ENCODE measurements at regions of chr5 and their contacts with region 1.

Region 1: GRCh38 chr5:170986598-170986997 is 124.8 kb downstream of the RANBP17 start:
- DNase-seq: no peak
- H3K4me3 ChIP-seq: no peak overlapping the region
- H3K27ac ChIP-seq: no peak overlapping the region
- H3K4me1 ChIP-seq: no peaks in the 10 kb centered on the region
- H3K27me3 ChIP-seq: no peaks in the 10 kb centered on the region
- CTCF ChIP-seq: no peak
- EP300 ChIP-seq: no peak
- POLR2A ChIP-seq: no peak
- RAD21 ChIP-seq: peak in 1 of 2 experiments; percentile 33; a peak in 2 of 4 replicates

Region 2: DNA sequence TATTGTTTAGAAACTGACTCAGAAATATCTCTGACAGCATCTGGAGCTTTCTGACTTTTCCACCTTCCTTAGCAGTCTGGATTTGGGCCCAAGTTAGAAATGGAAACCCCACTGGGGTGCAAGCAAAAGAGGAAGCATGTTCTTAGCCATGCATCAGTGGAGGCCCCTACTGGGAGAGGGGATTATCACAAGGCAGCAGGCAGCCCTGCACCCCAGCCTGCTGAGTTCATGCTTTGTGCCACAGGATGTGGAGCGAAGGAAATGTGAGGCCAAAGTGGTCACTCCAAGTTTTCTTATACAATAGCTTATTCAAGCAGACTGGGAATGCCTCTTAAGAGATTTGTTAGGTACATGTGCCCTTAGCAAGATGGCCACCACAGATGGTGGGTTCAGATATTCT is 176.0 kb after region 1 on chr5:
- CTCF ChIA-PET with region 1: interaction called, 10 read pairs
- POLR2A ChIA-PET with region 1: no interaction called
- DNase-seq: peak; percentile 39 to 72
- H3K4me3 ChIP-seq: no peak overlapping the region
- H3K27ac ChIP-seq: no peak overlapping the region
- H3K4me1 ChIP-seq: peaks cover 0 to 5% (median 0%) of the 10 kb centered on the region in 4 experiments; a peak in 1 of 7 replicates
- H3K27me3 ChIP-seq: no peaks in the 10 kb centered on the region
- CTCF ChIP-seq: peak; percentile 61 to 85 (median 80)
- EP300 ChIP-seq: no peak; a peak in 1 of 3 replicates
- POLR2A ChIP-seq: no peak
- RAD21 ChIP-seq: peak; percentile 70 to 80

Measured in H1 (cell line).